Mammary epithelial cell (primary cell): ENCODE measurements at regions of chr2 and their contacts with region 1.

Region 1: DNA sequence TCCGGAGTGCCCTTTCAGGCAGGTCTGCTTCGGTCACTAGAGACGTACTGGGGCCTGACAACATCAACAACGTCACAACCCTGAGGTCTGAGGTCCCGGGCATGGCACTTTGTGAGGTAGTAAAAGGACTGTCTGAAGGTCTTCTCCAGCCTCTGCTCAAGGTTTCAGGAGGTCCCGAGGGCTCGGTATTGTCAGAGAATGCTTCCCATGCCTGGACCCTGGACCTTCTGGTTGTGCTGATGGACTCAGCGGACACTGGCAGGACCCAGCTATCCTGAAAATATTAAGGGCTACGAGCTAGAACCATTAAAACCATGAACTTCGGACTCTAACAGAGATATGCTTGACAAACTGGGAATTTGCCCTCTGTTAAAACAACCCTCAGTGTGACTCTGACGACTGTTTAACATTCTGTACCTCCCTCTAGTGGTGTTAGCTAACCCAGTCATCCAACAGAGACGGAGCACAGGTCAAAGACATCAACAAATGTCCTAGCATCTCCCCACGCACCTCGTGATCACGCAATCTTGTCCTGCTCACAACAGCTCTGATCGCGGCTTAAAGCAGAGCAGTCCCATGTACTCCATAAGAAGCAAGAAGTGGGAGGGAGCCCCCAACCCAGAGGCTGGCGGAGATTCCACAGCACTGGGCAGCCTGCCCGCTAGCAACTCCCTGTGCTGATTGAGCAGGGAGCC is 96.5 kb downstream of the CCDC93 start:
- DNase-seq: no peak
- H3K4me3 ChIP-seq: no peak overlapping the region
- H3K27ac ChIP-seq: no peak overlapping the region
- H3K4me1 ChIP-seq: no peaks in the 10 kb centered on the region
- H3K27me3 ChIP-seq: no peaks in the 10 kb centered on the region
- CTCF ChIP-seq: peak in 1 of 2 donors; percentile 20

Region 2: GRCh38 chr2:117846737-117847136 is 70.6 kb before region 1 on chr2:
- CTCF ChIA-PET with region 1: no interaction called
- dilution Hi-C with region 1: no loop called
- in situ Hi-C with region 1: no loop called
- intact Hi-C with region 1: loop called (anchors 5 kb)
- DNase-seq: no peak
- H3K4me3 ChIP-seq: no peak overlapping the region
- H3K27ac ChIP-seq: no peak overlapping the region
- H3K4me1 ChIP-seq: no peaks in the 10 kb centered on the region
- H3K27me3 ChIP-seq: peaks cover 10% of the 10 kb centered on the region
- CTCF ChIP-seq: no peak